MCF 10A (cell line): ENCODE measurements at regions of chr20 and their contacts with region 1.

Region 1: DNA sequence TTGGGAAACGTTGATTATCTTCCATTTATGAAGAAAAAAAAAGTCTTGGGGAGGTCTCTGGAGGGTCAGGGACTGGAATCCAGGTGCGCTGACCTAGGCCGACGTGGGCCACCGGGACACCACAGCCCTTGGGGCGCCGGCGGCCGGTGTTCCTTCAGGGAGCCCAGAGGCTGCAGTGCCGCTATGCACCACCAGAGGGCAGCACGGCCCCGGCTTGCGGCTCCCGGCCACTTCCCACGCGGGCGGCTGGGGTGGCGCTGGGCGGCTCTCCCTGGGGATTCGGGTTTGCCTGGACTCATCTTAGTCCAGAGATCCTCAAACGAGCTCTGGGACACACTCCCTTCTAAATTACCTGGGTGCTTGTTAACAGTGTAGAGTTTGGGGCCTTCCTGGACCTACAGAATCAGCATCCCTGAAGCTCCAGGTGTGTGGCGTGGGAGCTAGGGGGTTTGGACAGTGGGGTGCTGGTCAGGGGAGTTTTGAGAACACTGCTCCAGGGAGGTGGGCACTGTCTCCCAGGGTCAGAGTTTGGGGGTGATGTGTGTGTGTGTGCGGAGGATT is 23.0 kb upstream of the GTSF1L start:
- DNase-seq: peak; percentile 75
- H3K4me3 Mint-ChIP-seq: no peak overlapping the region
- H3K27ac Mint-ChIP-seq: peak overlapping the region; percentile 94
- H3K4me1 Mint-ChIP-seq: peaks cover 19% of the 10 kb centered on the region
- H3K27me3 Mint-ChIP-seq: no peaks in the 10 kb centered on the region
- CTCF ChIP-seq: peak; percentile 100

Region 2: GRCh38 chr20:43642548-43642947 is 107.3 kb before region 1 on chr20:
- CTCF ChIA-PET with region 1: no interaction called
- POLR2A ChIA-PET with region 1: no interaction called
- intact Hi-C with region 1: no loop called
- DNase-seq: no peak
- H3K4me3 Mint-ChIP-seq: no peak overlapping the region
- H3K27ac Mint-ChIP-seq: no peak overlapping the region
- H3K4me1 Mint-ChIP-seq: no peaks in the 10 kb centered on the region
- H3K27me3 Mint-ChIP-seq: no peaks in the 10 kb centered on the region
- CTCF ChIP-seq: no peak

Region 3: DNA sequence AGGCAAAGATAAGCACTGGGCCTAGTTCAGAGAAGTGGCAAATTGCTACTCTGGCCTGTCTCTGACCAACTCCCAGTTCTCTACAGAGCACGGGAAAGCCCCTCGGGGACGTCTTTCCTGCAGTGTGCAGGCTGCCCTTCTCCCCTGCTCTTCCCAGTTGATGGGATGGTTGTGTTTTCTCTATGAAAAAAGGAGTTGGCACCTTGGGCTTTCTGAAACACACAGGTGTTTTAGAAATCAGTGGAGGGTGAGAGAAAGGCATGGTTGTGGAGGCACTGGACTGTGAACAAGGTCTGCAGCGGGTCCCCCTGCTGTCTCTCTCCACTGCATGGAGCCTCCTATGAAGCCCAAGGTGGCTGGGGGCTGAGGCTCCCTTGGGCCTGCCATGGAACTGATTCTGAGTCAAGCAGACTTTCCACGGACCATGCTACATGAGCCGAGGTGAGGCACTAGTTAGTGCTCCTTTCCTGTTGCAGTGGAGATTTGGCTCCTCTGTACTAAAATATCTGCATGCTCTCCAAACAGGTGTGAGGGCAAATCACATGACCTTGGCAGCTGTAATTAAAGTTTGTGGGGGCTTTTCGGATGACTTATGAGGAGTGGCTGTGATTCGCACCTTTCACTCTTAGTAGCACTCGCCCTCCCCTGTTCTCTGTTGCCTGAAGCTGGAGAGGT is 39.3 kb before region 1 on chr20:
- CTCF ChIA-PET with region 1: interaction called, 12 read pairs
- POLR2A ChIA-PET with region 1: no interaction called
- intact Hi-C with region 1: no loop called
- DNase-seq: no peak
- H3K4me3 Mint-ChIP-seq: no peak overlapping the region
- H3K27ac Mint-ChIP-seq: no peak overlapping the region
- H3K4me1 Mint-ChIP-seq: no peaks in the 10 kb centered on the region
- H3K27me3 Mint-ChIP-seq: no peaks in the 10 kb centered on the region
- CTCF ChIP-seq: no peak

Region 4: GRCh38 chr20:43767686-43768474 is 18.1 kb after region 1 on chr20:
- CTCF ChIA-PET with region 1: interaction called, 63 read pairs
- POLR2A ChIA-PET with region 1: no interaction called
- intact Hi-C with region 1: no loop called
- DNase-seq: peak; percentile 50
- H3K4me3 Mint-ChIP-seq: no peak overlapping the region
- H3K27ac Mint-ChIP-seq: no peak overlapping the region
- H3K4me1 Mint-ChIP-seq: peaks cover 10% of the 10 kb centered on the region
- H3K27me3 Mint-ChIP-seq: peaks cover 29% of the 10 kb centered on the region
- CTCF ChIP-seq: no peak

Region 5: GRCh38 chr20:43942661-43943290 is 193.0 kb after region 1 on chr20:
- CTCF ChIA-PET with region 1: interaction called, 71 read pairs
- POLR2A ChIA-PET with region 1: interaction called, 3 read pairs
- intact Hi-C with region 1: no loop called
- DNase-seq: peak; percentile 64
- H3K4me3 Mint-ChIP-seq: no peak overlapping the region
- H3K27ac Mint-ChIP-seq: peak overlapping the region; percentile 71
- H3K4me1 Mint-ChIP-seq: peaks cover 42% of the 10 kb centered on the region
- H3K27me3 Mint-ChIP-seq: no peaks in the 10 kb centered on the region
- CTCF ChIP-seq: no peak

Region 6: DNA sequence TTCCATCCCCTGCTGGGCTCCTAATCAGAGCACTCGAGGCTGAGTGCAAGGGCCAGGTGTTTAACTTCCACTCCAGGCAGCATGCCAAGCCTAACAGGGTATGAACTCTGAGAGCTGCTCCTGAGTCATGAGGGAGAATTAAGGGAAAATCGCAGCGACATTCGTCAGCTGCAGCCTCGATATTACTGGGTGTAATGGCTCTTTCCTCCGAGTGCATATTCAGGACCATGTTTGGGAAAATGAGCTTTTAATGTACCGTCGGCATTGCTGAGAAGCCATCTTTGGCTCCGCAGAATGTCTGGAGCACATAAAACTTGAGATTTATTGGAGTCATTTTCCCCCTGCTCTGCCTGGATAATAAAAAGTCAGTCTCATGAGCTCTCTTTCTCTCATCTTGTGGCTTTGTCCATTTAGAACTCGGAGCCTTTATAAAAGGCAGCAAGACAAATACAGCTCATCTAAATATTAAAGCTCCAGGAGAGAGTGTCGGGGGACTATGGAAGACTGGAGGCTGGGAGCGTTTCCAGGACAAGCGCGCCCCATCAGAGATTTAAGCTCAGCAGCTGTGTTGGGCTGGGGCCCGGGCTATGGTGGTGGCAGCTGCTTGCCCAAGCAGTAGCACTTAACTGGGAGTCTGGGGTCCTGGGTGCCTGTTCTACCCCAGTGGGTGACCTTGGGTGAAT is 268.6 kb after region 1 on chr20:
- CTCF ChIA-PET with region 1: interaction called, 18 read pairs
- POLR2A ChIA-PET with region 1: no interaction called
- intact Hi-C with region 1: no loop called
- DNase-seq: peak; percentile 95
- H3K4me3 Mint-ChIP-seq: no peak overlapping the region
- H3K27ac Mint-ChIP-seq: no peak overlapping the region
- H3K4me1 Mint-ChIP-seq: peaks cover 8% of the 10 kb centered on the region
- H3K27me3 Mint-ChIP-seq: no peaks in the 10 kb centered on the region
- CTCF ChIP-seq: no peak

Region 7: GRCh38 chr20:44080646-44081267 is 330.9 kb after region 1 on chr20:
- CTCF ChIA-PET with region 1: interaction called, 521 read pairs
- POLR2A ChIA-PET with region 1: interaction called, 18 read pairs
- intact Hi-C with region 1: loop called (anchors 1 kb)
- DNase-seq: peak; percentile 85
- H3K4me3 Mint-ChIP-seq: no peak overlapping the region
- H3K27ac Mint-ChIP-seq: no peak overlapping the region
- H3K4me1 Mint-ChIP-seq: peaks cover 12% of the 10 kb centered on the region
- H3K27me3 Mint-ChIP-seq: no peaks in the 10 kb centered on the region
- CTCF ChIP-seq: peak; percentile 96

Region 8: GRCh38 chr20:44187051-44187762 is 437.4 kb after region 1 on chr20 and contains the start of gene JPH2:
- CTCF ChIA-PET with region 1: interaction called, 16 read pairs
- POLR2A ChIA-PET with region 1: interaction called, 8 read pairs
- intact Hi-C with region 1: loop called (anchors 2 kb)
- DNase-seq: peak; percentile 92
- H3K4me3 Mint-ChIP-seq: peak within 1 kb of the TSS; percentile 67
- H3K27ac Mint-ChIP-seq: peak within 1 kb of the TSS; percentile 79
- H3K4me1 Mint-ChIP-seq: peaks cover 63% of the 10 kb centered on the region
- H3K27me3 Mint-ChIP-seq: no peaks in the 10 kb centered on the region
- CTCF ChIP-seq: no peak
- total RNA-seq, gene JPH2: 11.1 and 14.7 TPM in 2 replicates